AG04450 (cell line): ENCODE measurements at regions of chr12 and their contacts with region 1.

Region 1: GRCh38 chr12:810671-811415 is 58.5 kb downstream of the WNK1 start:
- DNase-seq: no peak
- H3K4me3 ChIP-seq: no peak overlapping the region
- H3K27ac ChIP-seq: no peak overlapping the region
- H3K27me3 ChIP-seq: no peaks in the 10 kb centered on the region
- CTCF ChIP-seq: no peak

Region 2: GRCh38 chr12:575948-576612 is 234.8 kb before region 1 on chr12:
- CTCF ChIA-PET with region 1: interaction called, 55 read pairs
- POLR2A ChIA-PET with region 1: no interaction called
- DNase-seq: no peak
- H3K4me3 ChIP-seq: peak overlapping the region; percentile 20; the same call in 1 of the 2 replicates
- H3K27ac ChIP-seq: no peak overlapping the region
- H3K27me3 ChIP-seq: peaks cover 6% of the 10 kb centered on the region
- CTCF ChIP-seq: peak; percentile 92

Region 3: GRCh38 chr12:591167-592023 is 219.4 kb before region 1 on chr12:
- CTCF ChIA-PET with region 1: no interaction called
- POLR2A ChIA-PET with region 1: no interaction called
- DNase-seq: no peak
- H3K4me3 ChIP-seq: no peak overlapping the region
- H3K27ac ChIP-seq: no peak overlapping the region
- H3K27me3 ChIP-seq: peaks cover 33% of the 10 kb centered on the region
- CTCF ChIP-seq: no peak

Region 4: GRCh38 chr12:728781-729180 is 82.1 kb before region 1 on chr12:
- CTCF ChIA-PET with region 1: no interaction called
- POLR2A ChIA-PET with region 1: no interaction called
- DNase-seq: no peak
- H3K4me3 ChIP-seq: no peak overlapping the region
- H3K27ac ChIP-seq: no peak overlapping the region
- H3K27me3 ChIP-seq: peaks cover 3% of the 10 kb centered on the region
- CTCF ChIP-seq: no peak

Region 5: DNA sequence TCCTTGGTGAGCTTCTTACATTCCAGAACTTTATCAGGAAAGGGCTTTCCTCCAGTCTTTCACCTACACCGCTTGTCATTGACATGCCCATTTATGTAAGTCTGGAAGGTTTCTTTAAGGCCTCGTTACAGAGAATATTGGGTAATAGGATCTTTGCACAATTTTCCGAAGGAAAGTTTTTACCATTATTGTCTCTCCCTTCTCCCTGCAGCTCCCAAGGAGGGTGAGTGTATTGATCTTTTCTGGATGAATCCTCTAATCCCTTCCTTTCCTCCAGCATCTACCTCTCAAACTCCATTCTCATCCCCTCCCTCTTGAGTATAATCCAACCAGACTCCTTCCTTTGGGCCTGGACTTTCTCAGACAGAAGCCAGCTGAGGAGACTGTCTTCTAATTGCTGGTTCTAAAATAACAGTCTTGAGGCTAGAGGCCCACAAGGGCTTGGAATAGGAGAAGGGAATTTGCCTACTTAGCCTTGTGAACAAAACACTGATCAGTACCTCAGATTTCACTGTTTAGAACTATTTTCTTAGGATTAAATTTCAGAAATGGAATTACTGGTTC is 36.7 kb before region 1 on chr12:
- CTCF ChIA-PET with region 1: interaction called, 27 read pairs
- POLR2A ChIA-PET with region 1: interaction called, 5 read pairs
- DNase-seq: no peak
- H3K4me3 ChIP-seq: no peak overlapping the region
- H3K27ac ChIP-seq: no peak overlapping the region
- H3K27me3 ChIP-seq: no peaks in the 10 kb centered on the region
- CTCF ChIP-seq: no peak

Region 6: GRCh38 chr12:789852-790563 is 20.8 kb before region 1 on chr12:
- CTCF ChIA-PET with region 1: interaction called, 12 read pairs
- POLR2A ChIA-PET with region 1: no interaction called
- DNase-seq: no peak
- H3K4me3 ChIP-seq: no peak overlapping the region
- H3K27ac ChIP-seq: no peak overlapping the region
- H3K27me3 ChIP-seq: no peaks in the 10 kb centered on the region
- CTCF ChIP-seq: no peak

Region 7: DNA sequence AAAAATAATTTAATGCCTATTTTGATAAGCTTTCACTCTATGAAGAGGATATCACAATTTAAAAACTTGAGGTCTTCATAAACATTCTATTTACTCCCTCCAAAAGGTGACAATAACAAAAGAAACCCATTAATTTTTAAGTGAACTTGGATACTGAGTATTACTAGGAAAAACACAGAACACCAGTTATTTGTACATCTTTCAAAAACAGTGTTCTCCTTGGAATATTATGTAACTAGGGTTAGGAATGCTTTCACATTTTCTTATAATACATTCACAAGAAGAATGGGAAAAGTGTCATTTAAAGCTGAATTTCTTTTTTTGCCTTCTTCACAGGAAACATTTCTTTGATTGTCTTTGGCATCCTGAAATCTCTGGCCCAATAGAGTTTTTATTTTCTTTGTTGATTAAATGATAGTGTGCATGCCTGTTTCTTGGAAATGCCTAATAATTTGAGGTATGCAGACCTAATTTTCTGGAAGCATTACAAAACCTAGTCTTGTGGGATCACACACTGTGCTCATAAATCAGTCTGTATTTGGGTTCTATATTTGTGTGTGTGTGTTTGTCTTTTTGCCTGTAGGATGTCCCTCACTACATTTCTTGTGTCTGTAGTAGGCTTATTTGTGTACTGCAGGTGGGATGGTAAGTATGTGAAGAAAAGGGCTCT is 18.0 kb after region 1 on chr12:
- CTCF ChIA-PET with region 1: interaction called, 18 read pairs
- POLR2A ChIA-PET with region 1: no interaction called
- DNase-seq: no peak
- H3K4me3 ChIP-seq: no peak overlapping the region
- H3K27ac ChIP-seq: no peak overlapping the region
- H3K27me3 ChIP-seq: no peaks in the 10 kb centered on the region
- CTCF ChIP-seq: no peak

Region 8: GRCh38 chr12:868722-869121 is 57.9 kb after region 1 on chr12:
- CTCF ChIA-PET with region 1: interaction called, 6 read pairs
- POLR2A ChIA-PET with region 1: interaction called, 11 read pairs
- DNase-seq: no peak
- H3K4me3 ChIP-seq: no peak overlapping the region
- H3K27ac ChIP-seq: no peak overlapping the region
- H3K27me3 ChIP-seq: no peaks in the 10 kb centered on the region
- CTCF ChIP-seq: peak; percentile 9; the same call in 1 of the 2 replicates